ENCODE measurements at regions of chr2 and their contacts with region 1.

Region 1: DNA sequence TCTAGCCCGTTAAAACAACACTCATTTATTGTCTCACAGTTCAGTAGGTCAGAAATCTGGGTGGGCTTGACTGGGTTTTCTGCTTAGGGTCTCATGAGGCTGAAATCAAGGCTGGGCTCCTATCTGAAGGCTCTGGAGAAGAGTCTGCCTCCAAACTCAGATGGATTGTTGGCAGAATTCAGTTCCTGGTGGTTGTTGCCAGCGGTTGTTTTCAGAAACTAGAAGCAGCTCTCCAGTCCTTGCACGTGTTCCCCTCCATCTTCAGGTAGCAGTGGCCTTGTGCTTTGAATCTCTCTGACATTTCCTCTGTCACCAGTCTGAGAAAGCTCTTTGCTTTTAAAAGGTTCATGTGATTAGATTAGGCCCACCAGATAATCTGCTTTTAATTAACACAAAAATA is 20.1 kb upstream of the FN1 start:
- DNase-seq: no peak
- ATAC-seq: no peak

Region 2: GRCh38 chr2:214881647-214882202 is 574.2 kb before region 1 on chr2:
- intact Hi-C with region 1: no loop called
- DNase-seq: no peak
- ATAC-seq: no peak

Region 3: GRCh38 chr2:215527736-215528135 is 71.8 kb after region 1 on chr2:
- intact Hi-C with region 1: no loop called
- DNase-seq: no peak
- ATAC-seq: peak in 1 of 2 donors; percentile 71

Region 4: GRCh38 chr2:215917953-215918620 is 462.1 kb after region 1 on chr2:
- intact Hi-C with region 1: loop called in 1 of 2 experiments (anchors 2 kb)
- DNase-seq: no peak
- ATAC-seq: no peak